H1 (cell line): ENCODE measurements at regions of chr9 and their contacts with region 1.

Region 1: GRCh38 chr9:98118640-98119601 is at the start of gene TRIM14:
- DNase-seq: peak; percentile 53 to 80
- H3K4me3 ChIP-seq: peak within 1 kb of the TSS; percentile 40 to 63 (median 54)
- H3K27ac ChIP-seq: no peak within 1 kb of the TSS
- H3K4me1 ChIP-seq: peaks cover 0 to 8% (median 3%) of the 10 kb centered on the region in 4 experiments; a peak in 4 of 7 replicates
- H3K27me3 ChIP-seq: no peaks in the 10 kb centered on the region; a peak in 1 of 7 replicates
- CTCF ChIP-seq: peak in 1 of 3 experiments; percentile 15; a peak in 1 of 4 replicates
- EP300 ChIP-seq: no peak
- POLR2A ChIP-seq: no peak
- RAD21 ChIP-seq: peak in 1 of 2 experiments; percentile 32; a peak in 2 of 4 replicates
- total RNA-seq, gene TRIM14: 18.7 and 19.4 TPM in 2 replicates

Region 2: GRCh38 chr9:98104445-98104881 is 14.5 kb before region 1 on chr9:
- CTCF ChIA-PET with region 1: interaction called, 11 read pairs
- POLR2A ChIA-PET with region 1: interaction called, 7 read pairs
- DNase-seq: no peak
- H3K4me3 ChIP-seq: no peak overlapping the region
- H3K27ac ChIP-seq: no peak overlapping the region
- H3K4me1 ChIP-seq: peaks cover 0 to 7% (median 3%) of the 10 kb centered on the region in 4 experiments; a peak in 4 of 7 replicates
- H3K27me3 ChIP-seq: no peaks in the 10 kb centered on the region
- CTCF ChIP-seq: no peak
- EP300 ChIP-seq: no peak
- POLR2A ChIP-seq: no peak
- RAD21 ChIP-seq: no peak

Region 3: GRCh38 chr9:98132806-98133631 is 14.1 kb after region 1 on chr9:
- CTCF ChIA-PET with region 1: interaction called, 14 read pairs
- POLR2A ChIA-PET with region 1: interaction called, 3 read pairs
- DNase-seq: no peak
- H3K4me3 ChIP-seq: 0 out of 8 replicates have a peak overlapping the region, but pooled peaks of 1 of the 4 experiments have one; percentile 5
- H3K27ac ChIP-seq: no peak overlapping the region
- H3K4me1 ChIP-seq: peaks cover 0 to 11% (median 0%) of the 10 kb centered on the region in 4 experiments; a peak in 3 of 7 replicates
- H3K27me3 ChIP-seq: no peaks in the 10 kb centered on the region
- CTCF ChIP-seq: no peak
- EP300 ChIP-seq: no peak
- POLR2A ChIP-seq: no peak
- RAD21 ChIP-seq: no peak